ENCODE measurements at regions of chr4 and their contacts with region 1.

Region 1: DNA sequence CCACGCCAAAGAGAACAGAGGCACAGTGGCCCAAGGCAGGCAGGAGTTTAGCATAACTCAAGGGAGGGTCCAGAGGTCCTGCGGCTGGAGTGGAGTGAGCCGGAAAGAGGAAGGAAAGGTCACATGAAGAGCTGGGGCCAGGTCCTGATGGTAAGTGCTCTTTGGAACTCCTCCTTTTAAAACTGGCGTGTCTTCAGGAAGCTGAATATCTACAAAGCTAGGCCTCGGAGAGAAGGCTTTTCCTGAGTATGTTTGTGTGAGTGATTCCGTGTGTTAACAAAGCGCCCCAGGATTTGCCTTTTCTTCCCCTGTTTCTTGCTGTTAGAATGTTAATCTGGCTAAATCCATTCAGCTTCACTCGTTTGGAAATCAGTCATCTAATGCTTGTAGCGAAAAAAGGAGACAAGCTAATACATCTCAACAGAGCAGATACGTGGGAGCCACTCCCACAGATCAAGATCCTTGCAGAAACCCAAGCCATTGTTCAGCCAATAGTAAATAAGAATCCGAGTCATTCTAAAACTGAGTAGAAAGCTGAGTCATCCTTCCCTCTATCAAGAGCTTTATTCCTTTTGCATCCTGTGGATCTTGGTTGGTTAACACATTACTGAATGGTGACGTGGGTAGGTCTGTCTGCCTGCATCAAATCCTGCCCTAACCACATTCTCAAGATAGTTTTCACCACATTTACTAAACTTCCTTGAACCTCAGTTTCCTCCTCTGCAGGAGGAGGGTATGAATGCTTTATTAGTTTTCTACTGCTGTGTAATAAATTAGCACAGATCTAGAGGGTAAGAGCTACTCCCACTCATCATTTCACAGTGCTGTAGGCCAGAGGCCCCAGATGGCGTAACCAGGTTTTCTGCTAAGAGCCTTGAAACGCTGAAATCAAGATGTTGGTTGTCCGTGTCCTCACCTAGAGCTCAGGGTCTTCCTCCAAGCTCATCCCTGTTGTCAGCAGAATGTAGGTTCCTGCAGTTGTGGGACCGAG is 43.2 kb upstream of the RBM47 start:
- DNase-seq: peak; percentile 98
- ATAC-seq: peak; percentile 83
- H3K4me3 ChIP-seq: peak overlapping the region; percentile 24; the same call in 1 of the 2 replicates
- H3K27ac ChIP-seq: peak overlapping the region; percentile 86
- H3K4me1 ChIP-seq: peaks cover 41% of the 10 kb centered on the region
- H3K27me3 ChIP-seq: no peaks in the 10 kb centered on the region
- CTCF ChIP-seq: no peak
- EP300 ChIP-seq: peak; percentile 88 to 92
- POLR2A ChIP-seq: no peak
- RAD21 ChIP-seq: no peak

Region 2: GRCh38 chr4:40193016-40193571 is 479.7 kb before region 1 on chr4:
- CTCF ChIA-PET with region 1: interaction called, 3 read pairs
- POLR2A ChIA-PET with region 1: interaction called, 3 read pairs
- RAD21 ChIA-PET with region 1: no interaction called
- SMC1A ChIA-PET with region 1: no interaction called
- in situ Hi-C with region 1: no loop called
- intact Hi-C with region 1: loop called (anchors 5 kb)
- DNase-seq: no peak
- ATAC-seq: peak; percentile 40
- H3K4me3 ChIP-seq: peak overlapping the region; percentile 88
- H3K27ac ChIP-seq: peak overlapping the region; percentile 92
- H3K4me1 ChIP-seq: peaks cover 9% of the 10 kb centered on the region
- H3K27me3 ChIP-seq: no peaks in the 10 kb centered on the region
- CTCF ChIP-seq: 0 out of 6 replicates have a peak, but pooled peaks of 1 of the 3 experiments have one; percentile 3
- EP300 ChIP-seq: 0 out of 4 replicates have a peak, but pooled peaks of 1 of the 2 experiments have one; percentile 25
- POLR2A ChIP-seq: peak; percentile 81
- RAD21 ChIP-seq: peak; percentile 17; the same call in 1 of the 2 replicates

Region 3: GRCh38 chr4:40325189-40326019 is 347.4 kb before region 1 on chr4:
- CTCF ChIA-PET with region 1: no interaction called
- POLR2A ChIA-PET with region 1: no interaction called
- RAD21 ChIA-PET with region 1: interaction called, 3 read pairs
- SMC1A ChIA-PET with region 1: interaction called, 14 read pairs
- in situ Hi-C with region 1: no loop called
- intact Hi-C with region 1: no loop called
- DNase-seq: no peak
- ATAC-seq: peak; percentile 98
- H3K4me3 ChIP-seq: no peak overlapping the region
- H3K27ac ChIP-seq: no peak overlapping the region
- H3K4me1 ChIP-seq: no peaks in the 10 kb centered on the region
- H3K27me3 ChIP-seq: no peaks in the 10 kb centered on the region
- CTCF ChIP-seq: peak; percentile 86 to 94 (median 89)
- EP300 ChIP-seq: no peak
- POLR2A ChIP-seq: no peak
- RAD21 ChIP-seq: peak; percentile 96

Region 4: GRCh38 chr4:40576631-40577480 is 96.0 kb before region 1 on chr4:
- CTCF ChIA-PET with region 1: interaction called, 20 read pairs
- POLR2A ChIA-PET with region 1: interaction called, 12 read pairs
- RAD21 ChIA-PET with region 1: interaction called, 16 read pairs
- SMC1A ChIA-PET with region 1: interaction called, 70 read pairs
- in situ Hi-C with region 1: no loop called
- intact Hi-C with region 1: loop called (anchors 5 kb)
- DNase-seq: peak; percentile 82
- ATAC-seq: peak; percentile 80
- H3K4me3 ChIP-seq: peak overlapping the region; percentile 35
- H3K27ac ChIP-seq: peak overlapping the region; percentile 89
- H3K4me1 ChIP-seq: peaks cover 57% of the 10 kb centered on the region
- H3K27me3 ChIP-seq: no peaks in the 10 kb centered on the region
- CTCF ChIP-seq: no peak
- EP300 ChIP-seq: peak in 1 of 2 experiments; percentile 63; a peak in 2 of 4 replicates
- POLR2A ChIP-seq: no peak
- RAD21 ChIP-seq: no peak

Region 5: GRCh38 chr4:40629401-40630334 is 43.2 kb before region 1 on chr4 and contains the start of gene RBM47:
- CTCF ChIA-PET with region 1: interaction called, 12 read pairs
- POLR2A ChIA-PET with region 1: interaction called, 80 read pairs
- RAD21 ChIA-PET with region 1: interaction called, 82 read pairs
- SMC1A ChIA-PET with region 1: interaction called, 215 read pairs
- in situ Hi-C with region 1: no loop called
- intact Hi-C with region 1: loop called (anchors 1 kb)
- DNase-seq: no peak
- ATAC-seq: peak; percentile 72
- H3K4me3 ChIP-seq: peak within 1 kb of the TSS; percentile 94
- H3K27ac ChIP-seq: peak within 1 kb of the TSS; percentile 92
- H3K4me1 ChIP-seq: peaks cover 10% of the 10 kb centered on the region
- H3K27me3 ChIP-seq: no peaks in the 10 kb centered on the region
- CTCF ChIP-seq: peak; percentile 21 to 27 (median 27); a peak in 3 of 6 replicates
- EP300 ChIP-seq: no peak
- POLR2A ChIP-seq: peak; percentile 61
- RAD21 ChIP-seq: 0 out of 2 replicates have a peak, but pooled peaks have one; percentile 2
- polyA plus RNA-seq, gene RBM47: 7.9 to 10.1 TPM

Region 6: GRCh38 chr4:40656201-40656901 is 16.5 kb before region 1 on chr4:
- CTCF ChIA-PET with region 1: interaction called, 40 read pairs
- POLR2A ChIA-PET with region 1: interaction called, 19 read pairs
- RAD21 ChIA-PET with region 1: interaction called, 40 read pairs
- SMC1A ChIA-PET with region 1: interaction called, 39 read pairs
- in situ Hi-C with region 1: no loop called
- intact Hi-C with region 1: loop called (anchors 2 kb)
- DNase-seq: peak; percentile 91
- ATAC-seq: peak; percentile 95
- H3K4me3 ChIP-seq: peak overlapping the region; percentile 35; the same call in 1 of the 2 replicates
- H3K27ac ChIP-seq: peak overlapping the region; percentile 97
- H3K4me1 ChIP-seq: peaks cover 35% of the 10 kb centered on the region
- H3K27me3 ChIP-seq: no peaks in the 10 kb centered on the region
- CTCF ChIP-seq: no peak
- EP300 ChIP-seq: peak in 1 of 2 experiments; percentile 79; a peak in 2 of 4 replicates
- POLR2A ChIP-seq: no peak
- RAD21 ChIP-seq: no peak

Region 7: DNA sequence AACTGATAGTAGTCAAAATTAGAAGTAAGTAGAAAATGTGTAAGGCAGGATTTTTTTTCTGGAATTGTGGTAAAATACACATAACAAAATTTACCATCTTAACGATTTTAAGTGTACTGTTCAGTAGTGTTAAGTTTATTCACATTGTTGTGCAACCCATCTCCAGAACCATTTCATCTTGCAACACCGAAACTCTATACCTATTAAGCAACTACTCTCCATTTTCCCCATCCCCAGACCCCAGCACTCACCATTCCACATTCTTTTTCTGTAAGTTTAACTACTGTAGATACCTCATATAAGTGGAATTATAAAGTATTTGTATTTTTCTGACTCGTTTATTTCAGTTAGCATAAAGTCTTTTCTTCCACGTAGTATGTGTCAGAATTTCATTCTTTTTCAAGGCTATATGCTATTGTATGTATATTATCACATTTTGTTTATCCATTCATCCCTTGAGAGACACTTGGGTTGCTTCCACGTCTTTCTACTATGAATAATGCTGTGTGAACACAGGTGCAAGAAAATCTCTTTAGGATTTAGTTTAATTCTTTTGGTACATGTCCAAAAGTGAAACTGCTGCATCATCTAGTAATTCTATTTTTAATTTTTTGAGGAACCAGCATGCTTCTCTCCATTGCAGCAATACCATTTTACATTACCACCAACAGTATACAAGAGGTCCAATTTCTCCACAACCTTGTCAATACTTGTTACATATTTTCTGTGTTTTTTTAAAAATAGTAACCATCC is 37.8 kb after region 1 on chr4:
- CTCF ChIA-PET with region 1: interaction called, 4 read pairs
- POLR2A ChIA-PET with region 1: interaction called, 3 read pairs
- RAD21 ChIA-PET with region 1: interaction called, 3 read pairs
- SMC1A ChIA-PET with region 1: interaction called, 55 read pairs
- in situ Hi-C with region 1: no loop called
- intact Hi-C with region 1: no loop called
- DNase-seq: no peak
- ATAC-seq: no peak
- H3K4me3 ChIP-seq: no peak overlapping the region
- H3K27ac ChIP-seq: no peak overlapping the region
- H3K4me1 ChIP-seq: peaks cover 5% of the 10 kb centered on the region; the same call in 1 of the 2 replicates
- H3K27me3 ChIP-seq: no peaks in the 10 kb centered on the region
- CTCF ChIP-seq: no peak
- EP300 ChIP-seq: no peak
- POLR2A ChIP-seq: no peak
- RAD21 ChIP-seq: no peak

Region 8: GRCh38 chr4:40769266-40769665 is 96.4 kb after region 1 on chr4:
- CTCF ChIA-PET with region 1: no interaction called
- POLR2A ChIA-PET with region 1: no interaction called
- RAD21 ChIA-PET with region 1: no interaction called
- SMC1A ChIA-PET with region 1: no interaction called
- in situ Hi-C with region 1: no loop called
- intact Hi-C with region 1: no loop called
- DNase-seq: no peak
- ATAC-seq: no peak
- H3K4me3 ChIP-seq: no peak overlapping the region
- H3K27ac ChIP-seq: no peak overlapping the region
- H3K4me1 ChIP-seq: no peaks in the 10 kb centered on the region
- H3K27me3 ChIP-seq: no peaks in the 10 kb centered on the region
- CTCF ChIP-seq: no peak
- EP300 ChIP-seq: no peak
- POLR2A ChIP-seq: no peak
- RAD21 ChIP-seq: no peak